B cell (primary cell): ENCODE measurements at regions of chr6 and their contacts with region 1.

Region 1: GRCh38 chr6:160766989-160767660 is 65.1 kb downstream of the PLG start:
- DNase-seq: peak; percentile 61
- ATAC-seq: peak; percentile 65
- H3K4me3 ChIP-seq: peak overlapping the region in 2 of 5 experiments; percentile 22 to 33
- H3K4me3 Mint-ChIP-seq: peak overlapping the region; percentile 81
- H3K27ac ChIP-seq: no peak overlapping the region
- H3K27ac Mint-ChIP-seq: no peak overlapping the region
- H3K4me1 ChIP-seq: peaks cover 0 to 6% of the 10 kb centered on the region in 2 donors
- H3K4me1 Mint-ChIP-seq: peaks cover 11% of the 10 kb centered on the region
- H3K27me3 ChIP-seq: peaks cover 0 to 19% (median 6%) of the 10 kb centered on the region in 4 experiments
- H3K27me3 Mint-ChIP-seq: peaks cover 37% of the 10 kb centered on the region
- CTCF ChIP-seq: peak; percentile 68

Region 2: GRCh38 chr6:159862103-159862502 is 905.0 kb before region 1 on chr6:
- CTCF ChIA-PET with region 1: no interaction called
- POLR2A ChIA-PET with region 1: no interaction called
- intact Hi-C with region 1: loop called (anchors 5 kb)
- DNase-seq: no peak
- ATAC-seq: no peak
- H3K4me3 ChIP-seq: no peak overlapping the region
- H3K4me3 Mint-ChIP-seq: no peak overlapping the region
- H3K27ac ChIP-seq: no peak overlapping the region
- H3K27ac Mint-ChIP-seq: no peak overlapping the region
- H3K4me1 ChIP-seq: no peaks in the 10 kb centered on the region
- H3K4me1 Mint-ChIP-seq: no peaks in the 10 kb centered on the region
- H3K27me3 ChIP-seq: peaks cover 0 to 7% (median 3%) of the 10 kb centered on the region in 4 experiments
- H3K27me3 Mint-ChIP-seq: peaks cover 24% of the 10 kb centered on the region
- CTCF ChIP-seq: no peak

Region 3: GRCh38 chr6:160520043-160520904 is 246.9 kb before region 1 on chr6:
- CTCF ChIA-PET with region 1: no interaction called
- POLR2A ChIA-PET with region 1: no interaction called
- intact Hi-C with region 1: loop called (anchors 2 kb)
- DNase-seq: peak; percentile 83
- ATAC-seq: peak; percentile 83
- H3K4me3 ChIP-seq: peak overlapping the region in 4 of 5 experiments; percentile 56 to 81 (median 70)
- H3K4me3 Mint-ChIP-seq: peak overlapping the region; percentile 95
- H3K27ac ChIP-seq: peak overlapping the region in 1 of 2 donors; percentile 61
- H3K27ac Mint-ChIP-seq: peak overlapping the region; percentile 74
- H3K4me1 ChIP-seq: peaks cover 5% of the 10 kb centered on the region in 2 donors
- H3K4me1 Mint-ChIP-seq: peaks cover 10% of the 10 kb centered on the region
- H3K27me3 ChIP-seq: no peaks in the 10 kb centered on the region
- H3K27me3 Mint-ChIP-seq: peaks cover 21% of the 10 kb centered on the region
- CTCF ChIP-seq: peak; percentile 27

Region 4: GRCh38 chr6:160634706-160635105 is 132.4 kb before region 1 on chr6:
- CTCF ChIA-PET with region 1: no interaction called
- POLR2A ChIA-PET with region 1: no interaction called
- intact Hi-C with region 1: no loop called
- DNase-seq: no peak
- ATAC-seq: no peak
- H3K4me3 ChIP-seq: no peak overlapping the region
- H3K4me3 Mint-ChIP-seq: no peak overlapping the region
- H3K27ac ChIP-seq: no peak overlapping the region
- H3K27ac Mint-ChIP-seq: no peak overlapping the region
- H3K4me1 ChIP-seq: no peaks in the 10 kb centered on the region
- H3K4me1 Mint-ChIP-seq: no peaks in the 10 kb centered on the region
- H3K27me3 ChIP-seq: no peaks in the 10 kb centered on the region
- H3K27me3 Mint-ChIP-seq: no peaks in the 10 kb centered on the region
- CTCF ChIP-seq: no peak

Region 5: GRCh38 chr6:160733050-160733646 is 34.0 kb before region 1 on chr6:
- CTCF ChIA-PET with region 1: interaction called, 5 read pairs
- POLR2A ChIA-PET with region 1: no interaction called
- intact Hi-C with region 1: loop called (anchors 1 kb)
- DNase-seq: peak; percentile 55
- ATAC-seq: peak; percentile 62
- H3K4me3 ChIP-seq: no peak overlapping the region
- H3K4me3 Mint-ChIP-seq: no peak overlapping the region
- H3K27ac ChIP-seq: no peak overlapping the region
- H3K27ac Mint-ChIP-seq: no peak overlapping the region
- H3K4me1 ChIP-seq: no peaks in the 10 kb centered on the region
- H3K4me1 Mint-ChIP-seq: no peaks in the 10 kb centered on the region
- H3K27me3 ChIP-seq: peaks cover 0 to 9% (median 3%) of the 10 kb centered on the region in 4 experiments
- H3K27me3 Mint-ChIP-seq: peaks cover 42% of the 10 kb centered on the region
- CTCF ChIP-seq: peak; percentile 75

Region 6: DNA sequence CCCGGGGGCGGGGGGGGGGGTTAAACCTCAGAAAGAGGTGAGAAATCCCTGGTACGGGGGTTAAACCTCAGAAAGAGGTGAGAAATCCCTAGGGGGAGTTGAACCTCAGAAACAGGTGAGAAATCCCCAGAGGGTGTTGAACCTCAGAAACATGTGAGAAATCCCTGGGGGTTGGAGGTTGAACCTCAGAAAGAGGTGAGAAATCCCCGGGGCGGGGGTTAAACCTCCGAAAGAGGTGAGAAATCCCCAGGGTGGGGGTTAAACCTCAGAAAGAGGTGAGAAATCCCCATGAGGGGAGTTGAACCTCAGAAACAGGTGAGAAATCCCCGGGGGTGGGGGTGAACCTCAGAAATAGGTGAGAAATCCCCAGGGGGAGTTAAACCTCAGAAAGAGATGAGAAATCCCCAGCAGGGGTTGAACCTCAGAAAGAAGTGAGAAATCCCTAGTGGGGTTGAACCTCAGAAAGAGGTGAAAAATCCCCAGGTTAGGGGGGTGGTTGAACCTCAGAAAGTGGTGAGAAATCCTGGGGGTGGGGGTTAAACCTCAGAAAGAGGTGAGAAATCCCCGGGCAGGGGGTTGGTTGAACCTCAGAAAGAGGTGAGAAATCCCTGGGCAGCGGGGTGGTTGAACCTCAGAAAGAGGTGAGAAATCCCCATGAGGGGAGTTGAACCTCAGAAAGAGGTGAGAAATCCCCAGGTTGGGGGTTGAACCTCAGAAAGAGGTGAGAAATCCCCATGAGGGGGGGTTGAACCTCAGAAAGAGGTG is 22.3 kb after region 1 on chr6:
- CTCF ChIA-PET with region 1: no interaction called
- POLR2A ChIA-PET with region 1: no interaction called
- intact Hi-C with region 1: no loop called
- DNase-seq: peak; percentile 49
- ATAC-seq: no peak
- H3K4me3 ChIP-seq: no peak overlapping the region
- H3K4me3 Mint-ChIP-seq: no peak overlapping the region
- H3K27ac ChIP-seq: no peak overlapping the region
- H3K27ac Mint-ChIP-seq: no peak overlapping the region
- H3K4me1 ChIP-seq: peaks cover 0 to 5% of the 10 kb centered on the region in 2 donors
- H3K4me1 Mint-ChIP-seq: peaks cover 17% of the 10 kb centered on the region
- H3K27me3 ChIP-seq: no peaks in the 10 kb centered on the region
- H3K27me3 Mint-ChIP-seq: no peaks in the 10 kb centered on the region
- CTCF ChIP-seq: no peak

Region 7: GRCh38 chr6:162068340-162068739 is 1301.2 kb after region 1 on chr6:
- CTCF ChIA-PET with region 1: no interaction called
- POLR2A ChIA-PET with region 1: no interaction called
- intact Hi-C with region 1: no loop called
- DNase-seq: no peak
- ATAC-seq: no peak
- H3K4me3 ChIP-seq: no peak overlapping the region
- H3K4me3 Mint-ChIP-seq: no peak overlapping the region
- H3K27ac ChIP-seq: no peak overlapping the region
- H3K27ac Mint-ChIP-seq: no peak overlapping the region
- H3K4me1 ChIP-seq: no peaks in the 10 kb centered on the region
- H3K4me1 Mint-ChIP-seq: no peaks in the 10 kb centered on the region
- H3K27me3 ChIP-seq: no peaks in the 10 kb centered on the region
- H3K27me3 Mint-ChIP-seq: no peaks in the 10 kb centered on the region
- CTCF ChIP-seq: no peak